ENCODE measurements at regions of chr5 and their contacts with region 1.

Region 1: GRCh38 chr5:168104811-168105481 is 186.5 kb upstream of the WWC1 start:
- DNase-seq: no peak
- H3K4me3 ChIP-seq: no peak overlapping the region
- H3K27me3 ChIP-seq: no peaks in the 10 kb centered on the region
- CTCF ChIP-seq: peak; percentile 15; the same call in 1 of the 2 replicates

Region 2: DNA sequence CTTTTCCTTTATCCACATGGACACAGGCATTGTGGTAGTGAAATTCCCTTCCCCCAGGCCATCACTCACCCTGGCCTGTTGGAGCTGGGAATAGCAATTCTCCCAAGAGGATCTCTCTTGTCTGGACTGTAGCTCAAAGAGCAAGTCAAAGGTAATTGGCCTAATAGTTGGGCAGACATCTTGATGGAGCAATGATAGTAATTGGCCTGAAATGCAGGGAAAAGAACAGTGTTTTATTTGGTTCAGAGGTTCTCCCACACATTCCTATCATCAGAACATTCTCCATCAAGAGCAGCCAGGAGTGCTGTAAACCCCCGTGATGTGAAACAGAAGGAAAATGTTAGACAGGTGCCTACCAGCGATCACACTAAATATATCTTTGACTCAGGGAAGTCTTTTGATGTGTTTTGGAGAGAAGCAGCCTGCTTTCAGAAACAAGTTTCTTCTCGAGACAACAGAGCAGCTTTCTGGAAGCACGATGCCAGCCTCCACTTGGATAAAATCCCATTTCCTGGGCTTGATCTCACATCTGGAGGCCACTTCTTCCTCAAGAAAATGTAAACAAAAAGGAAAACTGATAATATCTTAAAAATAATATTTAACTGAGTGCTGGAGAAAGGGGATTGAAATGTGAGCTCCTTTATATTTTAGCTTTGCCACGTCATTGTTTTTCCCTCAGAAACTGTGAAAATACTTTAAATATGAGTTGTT is 11.6 kb before region 1 on chr5:
- CTCF ChIA-PET with region 1: interaction called, 30 read pairs
- POLR2A ChIA-PET with region 1: no interaction called
- DNase-seq: no peak
- H3K4me3 ChIP-seq: no peak overlapping the region
- H3K27me3 ChIP-seq: no peaks in the 10 kb centered on the region
- CTCF ChIP-seq: no peak

Region 3: DNA sequence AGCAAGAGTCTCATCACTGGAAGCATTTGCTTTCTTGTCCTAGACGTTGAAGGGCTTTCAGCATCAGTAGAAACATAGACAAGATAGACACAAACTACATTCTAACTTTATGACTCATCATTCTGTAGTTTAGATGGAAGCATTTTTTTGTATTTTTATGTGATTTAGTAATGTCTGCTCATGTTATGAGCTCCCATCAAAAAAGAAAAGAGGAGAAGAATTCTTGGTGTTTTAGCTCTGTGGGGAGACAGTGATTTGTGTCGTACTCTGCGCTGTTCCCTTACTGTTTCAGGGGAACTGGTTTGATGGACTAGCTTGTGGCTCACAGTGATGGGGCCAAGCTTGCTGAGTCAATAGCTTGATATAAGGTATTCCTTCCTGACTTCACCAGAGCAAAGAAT is 27.3 kb after region 1 on chr5:
- CTCF ChIA-PET with region 1: no interaction called
- POLR2A ChIA-PET with region 1: interaction called, 12 read pairs
- DNase-seq: no peak
- H3K4me3 ChIP-seq: no peak overlapping the region
- H3K27me3 ChIP-seq: no peaks in the 10 kb centered on the region; the same call in 1 of the 2 replicates
- CTCF ChIP-seq: no peak

Region 4: DNA sequence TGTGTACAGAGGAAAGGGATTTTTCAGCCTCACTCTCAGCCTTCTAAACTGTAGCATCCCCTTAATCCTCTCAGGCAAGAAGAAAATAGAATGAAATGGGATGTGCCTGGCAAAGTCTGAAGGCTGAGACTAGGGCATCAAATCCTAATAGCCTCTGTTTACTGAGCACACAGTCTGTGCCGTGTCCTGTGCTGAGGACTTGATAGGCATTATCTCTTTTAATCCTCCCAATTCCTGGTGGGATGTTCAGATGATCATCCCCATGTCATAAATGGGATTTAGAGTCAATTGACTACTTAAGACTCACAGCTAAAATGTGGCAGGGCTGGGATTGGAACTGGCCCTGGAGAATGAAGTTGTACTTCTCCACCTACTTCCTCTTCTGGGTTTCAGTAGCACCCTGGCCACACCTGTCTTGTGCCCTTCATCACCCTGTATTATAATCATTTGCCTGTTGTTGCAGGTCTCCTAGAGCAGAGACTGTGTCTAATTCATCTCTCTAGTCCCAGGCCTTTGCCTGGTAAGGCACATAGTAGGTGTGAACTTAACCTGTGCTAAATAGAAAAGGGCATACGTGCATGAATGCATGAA is 267.5 kb after region 1 on chr5:
- CTCF ChIA-PET with region 1: no interaction called
- POLR2A ChIA-PET with region 1: no interaction called
- DNase-seq: no peak
- H3K4me3 ChIP-seq: no peak overlapping the region
- H3K27me3 ChIP-seq: no peaks in the 10 kb centered on the region
- CTCF ChIP-seq: no peak

Measured in BJ (cell line).